Common myeloid progenitor, CD34-positive (primary cell): ENCODE measurements at regions of chr16 and their contacts with region 1.

Region 1: GRCh38 chr16:88686439-88687253 is at the start of gene SNAI3:
- DNase-seq: peak; percentile 54 to 61 (median 58)
- H3K4me3 ChIP-seq: peak within 1 kb of the TSS; percentile 43 to 87 (median 74)
- H3K27ac ChIP-seq: no peak within 1 kb of the TSS
- H3K4me1 ChIP-seq: peaks cover 2 to 64% (median 41%) of the 10 kb centered on the region in 4 experiments
- H3K27me3 ChIP-seq: no peaks in the 10 kb centered on the region

Region 2: GRCh38 chr16:88662843-88663606 is 23.6 kb before region 1 on chr16 and contains the start of gene MVD:
- CTCF ChIA-PET with region 1: interaction called, 14 read pairs
- POLR2A ChIA-PET with region 1: interaction called, 3 read pairs
- DNase-seq: peak; percentile 96 to 98 (median 98)
- H3K4me3 ChIP-seq: peak within 1 kb of the TSS; percentile 66 to 90 (median 82)
- H3K27ac ChIP-seq: peak within 1 kb of the TSS; percentile 54 to 89
- H3K4me1 ChIP-seq: peaks cover 0 to 25% (median 15%) of the 10 kb centered on the region in 4 experiments
- H3K27me3 ChIP-seq: no peaks in the 10 kb centered on the region

Region 3: GRCh38 chr16:88672776-88673175 is 13.9 kb before region 1 on chr16:
- CTCF ChIA-PET with region 1: interaction called, 13 read pairs
- POLR2A ChIA-PET with region 1: no interaction called
- DNase-seq: no peak
- H3K4me3 ChIP-seq: no peak overlapping the region
- H3K27ac ChIP-seq: no peak overlapping the region
- H3K4me1 ChIP-seq: no peaks in the 10 kb centered on the region
- H3K27me3 ChIP-seq: no peaks in the 10 kb centered on the region

Region 4: DNA sequence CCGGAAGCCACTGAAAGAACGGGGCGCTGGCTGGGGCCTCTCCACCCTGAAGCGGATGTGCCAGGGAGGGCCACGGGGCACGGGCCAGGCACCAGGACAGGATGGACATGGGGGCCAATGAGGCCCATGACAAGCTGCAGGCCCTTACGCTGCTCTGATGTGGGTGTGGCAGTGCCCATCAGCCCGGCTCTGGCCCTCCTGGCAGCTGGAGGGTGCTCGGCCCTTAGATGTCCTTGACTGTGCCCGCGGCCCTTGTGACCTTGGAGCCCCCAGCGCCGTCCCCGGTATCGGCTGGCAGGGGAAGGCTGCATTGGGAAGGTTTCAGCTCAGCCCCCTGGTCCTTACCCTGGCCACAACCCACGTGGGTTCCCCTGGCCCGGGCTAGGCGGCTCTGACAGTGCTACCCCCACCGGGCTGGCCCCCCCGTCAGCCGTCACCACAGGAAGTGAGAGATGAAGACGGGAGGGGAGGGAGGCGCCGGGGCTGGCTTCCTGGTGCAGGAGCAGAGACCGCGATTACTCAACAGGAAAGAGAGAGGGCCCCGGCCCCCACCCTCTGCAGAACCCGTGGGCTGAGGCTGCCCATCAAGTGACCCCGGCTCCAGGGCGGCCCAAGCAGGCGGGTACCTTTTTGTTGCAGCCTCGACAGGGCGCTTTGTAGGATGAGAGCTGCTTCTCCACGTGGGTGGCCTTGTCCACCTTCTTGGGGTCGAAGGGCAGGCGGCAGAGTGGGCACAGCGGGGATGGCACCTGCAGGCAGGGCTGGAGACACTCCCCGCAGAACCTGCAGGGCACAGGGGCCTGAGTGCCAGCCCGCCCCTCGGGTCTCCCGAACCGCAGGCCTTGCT is 14.2 kb after region 1 on chr16:
- CTCF ChIA-PET with region 1: interaction called, 24 read pairs
- POLR2A ChIA-PET with region 1: interaction called, 15 read pairs
- DNase-seq: peak; percentile 94 to 99 (median 98)
- H3K4me3 ChIP-seq: peak overlapping the region in 6 of 7 experiments; percentile 8 to 87 (median 54)
- H3K27ac ChIP-seq: peak overlapping the region in 1 of 2 experiments; percentile 77
- H3K4me1 ChIP-seq: peaks cover 6 to 73% (median 69%) of the 10 kb centered on the region in 4 experiments
- H3K27me3 ChIP-seq: no peaks in the 10 kb centered on the region

Region 5: GRCh38 chr16:88706288-88706964 is 19.8 kb after region 1 on chr16 and contains the starts of genes CTU2 and RNF166:
- CTCF ChIA-PET with region 1: interaction called, 24 read pairs
- POLR2A ChIA-PET with region 1: interaction called, 15 read pairs
- DNase-seq: peak; percentile 88 to 92 (median 91)
- H3K4me3 ChIP-seq: peak within 1 kb of the TSS; percentile 70 to 93 (median 87)
- H3K27ac ChIP-seq: peak within 1 kb of the TSS; percentile 40 to 79
- H3K4me1 ChIP-seq: peaks cover 9 to 59% (median 55%) of the 10 kb centered on the region in 4 experiments
- H3K27me3 ChIP-seq: no peaks in the 10 kb centered on the region

Region 6: GRCh38 chr16:88731699-88732098 is 45.1 kb after region 1 on chr16:
- CTCF ChIA-PET with region 1: no interaction called
- POLR2A ChIA-PET with region 1: no interaction called
- DNase-seq: no peak
- H3K4me3 ChIP-seq: no peak overlapping the region
- H3K27ac ChIP-seq: no peak overlapping the region
- H3K4me1 ChIP-seq: no peaks in the 10 kb centered on the region
- H3K27me3 ChIP-seq: no peaks in the 10 kb centered on the region